CD4-positive, alpha-beta memory T cell (primary cell): ENCODE measurements at regions of chr2 and their contacts with region 1.

Region 1: GRCh38 chr2:54838585-54839035 is 115.1 kb downstream of the EML6 start:
- DNase-seq: peak; percentile 40 to 51 (median 49)
- H3K4me3 ChIP-seq: no peak overlapping the region
- H3K4me3 Mint-ChIP-seq: no peak overlapping the region
- H3K27ac ChIP-seq: no peak overlapping the region
- H3K27ac Mint-ChIP-seq: no peak overlapping the region
- H3K4me1 ChIP-seq: no peaks in the 10 kb centered on the region
- H3K4me1 Mint-ChIP-seq: peaks cover 0 to 2% (median 0%) of the 10 kb centered on the region in 4 donors
- H3K27me3 ChIP-seq: no peaks in the 10 kb centered on the region
- H3K27me3 Mint-ChIP-seq: peaks cover 0 to 1% of the 10 kb centered on the region in 2 donors

Region 2: DNA sequence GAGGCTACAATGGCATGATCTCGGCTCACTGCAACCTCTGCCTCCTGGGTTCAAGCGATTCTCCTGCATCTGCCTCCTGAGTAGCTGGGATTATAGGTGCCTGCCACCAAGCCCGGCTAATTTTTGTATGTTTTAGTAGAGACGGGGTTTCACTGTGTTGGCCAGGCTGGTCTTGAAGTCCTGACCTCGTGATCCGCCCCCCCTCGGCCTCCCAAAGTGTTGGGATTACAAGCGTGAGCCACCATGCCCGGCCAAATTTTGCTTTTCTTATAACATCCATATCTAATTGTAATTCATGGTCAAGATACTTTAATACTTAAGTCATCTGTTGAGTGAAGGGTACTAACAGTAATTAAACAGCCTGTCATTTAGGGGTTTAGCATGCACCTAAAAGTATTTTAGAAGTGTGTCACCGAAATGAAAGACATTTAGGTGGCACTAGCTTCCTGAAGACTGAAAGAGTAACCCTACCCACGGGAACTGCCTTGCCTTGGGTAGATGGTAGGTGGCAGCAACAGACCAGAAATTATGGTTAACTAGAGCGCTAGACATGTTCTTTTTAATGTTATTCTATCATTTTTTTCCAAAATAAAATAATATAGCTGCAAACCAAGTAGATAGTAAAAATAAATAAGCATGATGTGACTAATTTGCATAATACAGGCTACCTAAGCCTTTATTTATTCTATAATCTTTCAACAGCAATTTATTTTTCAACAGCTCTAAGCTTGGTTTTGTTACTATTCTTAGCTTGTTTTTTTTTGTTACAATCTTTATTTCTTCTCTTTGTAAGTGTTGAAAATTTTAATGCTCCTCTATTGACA is 731.8 kb before region 1 on chr2:
- CTCF ChIA-PET with region 1: interaction called, 29 read pairs
- POLR2A ChIA-PET with region 1: no interaction called
- intact Hi-C with region 1: no loop called
- DNase-seq: peak; percentile 39 to 56 (median 54)
- H3K4me3 ChIP-seq: no peak overlapping the region
- H3K4me3 Mint-ChIP-seq: no peak overlapping the region
- H3K27ac ChIP-seq: no peak overlapping the region
- H3K27ac Mint-ChIP-seq: peak overlapping the region in 1 of 7 donors; percentile 68
- H3K4me1 ChIP-seq: peaks cover 13% of the 10 kb centered on the region
- H3K4me1 Mint-ChIP-seq: peaks cover 8 to 12% (median 9%) of the 10 kb centered on the region in 4 donors
- H3K27me3 ChIP-seq: no peaks in the 10 kb centered on the region
- H3K27me3 Mint-ChIP-seq: no peaks in the 10 kb centered on the region

Region 3: GRCh38 chr2:54512663-54513362 is 325.8 kb before region 1 on chr2:
- CTCF ChIA-PET with region 1: no interaction called
- POLR2A ChIA-PET with region 1: no interaction called
- intact Hi-C with region 1: no loop called
- DNase-seq: no peak
- H3K4me3 ChIP-seq: no peak overlapping the region
- H3K4me3 Mint-ChIP-seq: no peak overlapping the region
- H3K27ac ChIP-seq: no peak overlapping the region
- H3K27ac Mint-ChIP-seq: no peak overlapping the region
- H3K4me1 ChIP-seq: no peaks in the 10 kb centered on the region
- H3K4me1 Mint-ChIP-seq: no peaks in the 10 kb centered on the region
- H3K27me3 ChIP-seq: no peaks in the 10 kb centered on the region
- H3K27me3 Mint-ChIP-seq: no peaks in the 10 kb centered on the region

Region 4: DNA sequence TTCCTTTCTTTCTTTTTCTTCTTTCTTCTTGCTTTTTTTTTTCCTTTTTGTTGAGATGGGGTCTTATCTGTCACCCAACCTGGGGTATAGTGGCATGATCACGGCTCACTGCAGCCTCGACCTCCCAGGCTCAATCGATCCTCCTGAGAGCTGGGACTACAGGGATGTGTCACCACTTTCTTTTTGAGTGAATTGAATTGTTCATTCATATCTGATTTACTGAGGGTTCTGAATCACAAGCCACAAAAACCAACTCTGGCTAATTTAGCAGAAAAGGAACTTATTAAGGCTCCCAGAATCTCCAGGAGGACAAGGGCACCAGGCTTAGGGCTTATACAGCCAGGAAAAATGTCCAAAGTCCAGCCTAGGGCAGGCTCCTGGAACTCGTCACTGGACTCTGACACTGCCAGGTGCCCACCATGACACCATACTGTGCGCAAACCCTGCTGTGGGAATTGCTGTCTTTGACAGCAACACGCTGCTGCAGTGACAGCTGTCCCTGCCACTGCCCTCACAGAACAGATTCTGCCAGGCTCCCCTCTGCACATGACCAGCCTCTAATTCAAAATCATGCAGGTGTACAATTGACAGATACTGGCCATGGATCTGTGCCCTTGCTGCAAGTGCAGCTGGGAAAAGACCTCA is 158.1 kb before region 1 on chr2:
- CTCF ChIA-PET with region 1: no interaction called
- POLR2A ChIA-PET with region 1: no interaction called
- intact Hi-C with region 1: no loop called
- DNase-seq: no peak
- H3K4me3 ChIP-seq: no peak overlapping the region
- H3K4me3 Mint-ChIP-seq: peak overlapping the region in 5 of 8 donors; percentile 66 to 84 (median 79)
- H3K27ac ChIP-seq: no peak overlapping the region
- H3K27ac Mint-ChIP-seq: peak overlapping the region in 4 of 7 donors; percentile 25 to 87 (median 50)
- H3K4me1 ChIP-seq: peaks cover 8% of the 10 kb centered on the region
- H3K4me1 Mint-ChIP-seq: peaks cover 10 to 24% (median 14%) of the 10 kb centered on the region in 4 donors
- H3K27me3 ChIP-seq: no peaks in the 10 kb centered on the region
- H3K27me3 Mint-ChIP-seq: peaks cover 0 to 1% of the 10 kb centered on the region in 2 donors

Region 5: GRCh38 chr2:54704688-54705605 is 133.7 kb before region 1 on chr2:
- CTCF ChIA-PET with region 1: interaction called, 13 read pairs
- POLR2A ChIA-PET with region 1: no interaction called
- intact Hi-C with region 1: loop called (anchors 1 kb)
- DNase-seq: peak in 4 of 5 donors; percentile 56 to 63 (median 56)
- H3K4me3 ChIP-seq: no peak overlapping the region
- H3K4me3 Mint-ChIP-seq: no peak overlapping the region
- H3K27ac ChIP-seq: no peak overlapping the region
- H3K27ac Mint-ChIP-seq: no peak overlapping the region
- H3K4me1 ChIP-seq: peaks cover 10% of the 10 kb centered on the region
- H3K4me1 Mint-ChIP-seq: peaks cover 0 to 4% (median 2%) of the 10 kb centered on the region in 4 donors
- H3K27me3 ChIP-seq: no peaks in the 10 kb centered on the region
- H3K27me3 Mint-ChIP-seq: peaks cover 12 to 13% of the 10 kb centered on the region in 2 donors

Region 6: DNA sequence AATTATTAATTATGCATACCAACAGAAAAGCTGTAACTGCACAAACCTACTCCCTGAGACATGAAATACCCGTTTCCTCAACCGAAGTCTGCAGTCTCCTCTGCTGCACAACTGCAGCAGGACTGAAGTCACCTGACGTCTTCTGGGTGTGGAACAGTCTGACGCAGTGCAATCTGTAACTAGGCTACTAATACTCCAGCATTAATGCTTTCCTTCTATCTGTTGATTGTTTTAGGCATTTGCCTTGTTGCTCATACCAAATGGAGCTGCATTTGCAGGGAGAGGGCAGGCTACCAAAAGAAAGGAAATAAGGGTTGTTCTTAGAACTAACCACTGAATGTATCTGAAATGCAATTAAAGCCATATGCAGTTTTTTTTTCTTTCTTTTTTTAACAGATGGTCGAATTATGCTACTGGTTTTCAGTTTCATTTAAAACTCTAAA is 171.6 kb after region 1 on chr2:
- CTCF ChIA-PET with region 1: interaction called, 11 read pairs
- POLR2A ChIA-PET with region 1: no interaction called
- intact Hi-C with region 1: no loop called
- DNase-seq: peak; percentile 50 to 82 (median 71)
- H3K4me3 ChIP-seq: peak overlapping the region; percentile 9 to 44
- H3K4me3 Mint-ChIP-seq: peak overlapping the region; percentile 83 to 97 (median 93)
- H3K27ac ChIP-seq: peak overlapping the region; percentile 44
- H3K27ac Mint-ChIP-seq: peak overlapping the region; percentile 80 to 98 (median 94)
- H3K4me1 ChIP-seq: peaks cover 80% of the 10 kb centered on the region
- H3K4me1 Mint-ChIP-seq: peaks cover 45 to 73% (median 60%) of the 10 kb centered on the region in 4 donors
- H3K27me3 ChIP-seq: no peaks in the 10 kb centered on the region
- H3K27me3 Mint-ChIP-seq: no peaks in the 10 kb centered on the region

Region 7: GRCh38 chr2:55063713-55064323 is 225.2 kb after region 1 on chr2:
- CTCF ChIA-PET with region 1: no interaction called
- POLR2A ChIA-PET with region 1: no interaction called
- intact Hi-C with region 1: no loop called
- DNase-seq: peak in 1 of 5 donors; percentile 15
- H3K4me3 ChIP-seq: no peak overlapping the region
- H3K4me3 Mint-ChIP-seq: no peak overlapping the region
- H3K27ac ChIP-seq: no peak overlapping the region
- H3K27ac Mint-ChIP-seq: peak overlapping the region in 3 of 7 donors; percentile 29 to 76 (median 57)
- H3K4me1 ChIP-seq: no peaks in the 10 kb centered on the region
- H3K4me1 Mint-ChIP-seq: peaks cover 0 to 4% (median under 1%) of the 10 kb centered on the region in 4 donors
- H3K27me3 ChIP-seq: no peaks in the 10 kb centered on the region
- H3K27me3 Mint-ChIP-seq: no peaks in the 10 kb centered on the region

Region 8: GRCh38 chr2:55097461-55098410 is 259.1 kb after region 1 on chr2:
- CTCF ChIA-PET with region 1: no interaction called
- POLR2A ChIA-PET with region 1: no interaction called
- intact Hi-C with region 1: no loop called
- DNase-seq: no peak
- H3K4me3 ChIP-seq: no peak overlapping the region
- H3K4me3 Mint-ChIP-seq: no peak overlapping the region
- H3K27ac ChIP-seq: no peak overlapping the region
- H3K27ac Mint-ChIP-seq: no peak overlapping the region
- H3K4me1 ChIP-seq: peaks cover 3% of the 10 kb centered on the region
- H3K4me1 Mint-ChIP-seq: peaks cover 0 to 3% (median under 1%) of the 10 kb centered on the region in 4 donors
- H3K27me3 ChIP-seq: no peaks in the 10 kb centered on the region
- H3K27me3 Mint-ChIP-seq: no peaks in the 10 kb centered on the region

Region 9: DNA sequence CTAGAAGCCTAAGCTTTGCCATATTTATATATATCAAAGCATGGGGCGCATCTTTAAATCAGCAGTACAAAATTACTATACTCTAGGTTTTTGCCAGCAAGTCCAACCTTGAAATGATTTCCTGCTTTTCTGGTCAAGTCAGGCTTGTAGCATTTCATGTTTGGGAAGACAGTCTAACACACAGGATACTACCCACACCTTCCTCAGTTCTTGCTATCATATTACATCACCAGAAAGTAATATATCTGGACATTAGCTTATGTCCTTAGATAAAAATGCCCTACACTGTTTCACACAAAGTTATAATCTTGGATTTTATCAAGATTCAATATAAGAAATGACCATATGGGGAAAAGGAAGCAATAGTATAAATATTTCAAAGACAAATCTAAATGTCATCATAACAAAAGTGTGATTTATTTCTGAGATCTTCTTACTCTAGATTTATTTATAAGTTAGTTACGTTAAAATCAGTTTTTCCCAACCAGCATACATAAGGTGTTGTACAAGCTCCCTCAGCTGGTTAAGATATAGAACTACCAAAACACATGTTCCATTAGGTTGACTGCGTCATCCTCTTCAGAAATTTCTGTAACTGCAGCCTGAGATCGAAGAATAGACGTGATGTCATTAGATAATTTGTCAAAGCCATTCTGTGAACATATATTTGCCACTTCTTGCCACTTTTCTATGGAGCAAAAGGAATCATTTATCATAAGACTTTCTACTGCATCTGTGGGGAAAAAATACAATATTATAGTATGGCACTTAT is 336.8 kb after region 1 on chr2:
- CTCF ChIA-PET with region 1: interaction called, 27 read pairs
- POLR2A ChIA-PET with region 1: no interaction called
- intact Hi-C with region 1: loop called (anchors 1 kb)
- DNase-seq: peak in 4 of 5 donors; percentile 46 to 64 (median 52)
- H3K4me3 ChIP-seq: no peak overlapping the region
- H3K4me3 Mint-ChIP-seq: peak overlapping the region in 2 of 8 donors; percentile 1 to 27
- H3K27ac ChIP-seq: no peak overlapping the region
- H3K27ac Mint-ChIP-seq: peak overlapping the region in 1 of 7 donors; percentile 44
- H3K4me1 ChIP-seq: no peaks in the 10 kb centered on the region
- H3K4me1 Mint-ChIP-seq: peaks cover 0 to 6% (median 3%) of the 10 kb centered on the region in 4 donors
- H3K27me3 ChIP-seq: no peaks in the 10 kb centered on the region
- H3K27me3 Mint-ChIP-seq: no peaks in the 10 kb centered on the region